ENCODE measurements at regions of chr4 and their contacts with region 1.

Region 1: DNA sequence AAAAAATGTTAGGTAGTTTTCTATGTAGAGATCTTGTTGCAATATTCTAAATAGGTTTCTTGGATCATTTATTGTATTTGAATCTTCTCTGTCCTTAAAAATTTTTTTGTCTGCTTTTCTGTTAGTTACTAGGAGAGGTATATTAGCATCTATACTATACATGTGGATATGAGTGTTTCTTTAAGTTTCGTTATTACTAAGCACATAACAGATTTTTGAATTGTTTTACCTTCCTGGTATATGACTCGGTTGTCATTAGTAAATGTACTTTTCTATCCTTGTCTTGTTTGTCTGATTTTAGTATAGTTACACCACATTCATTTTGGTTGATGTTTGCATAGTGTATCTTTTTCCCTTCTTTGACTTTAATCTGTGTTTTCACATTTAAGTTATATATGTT is 20.2 kb downstream of the PYURF start:
- DNase-seq: no peak
- H3K4me3 ChIP-seq: no peak overlapping the region
- H3K27ac ChIP-seq: no peak overlapping the region
- H3K4me1 ChIP-seq: no peaks in the 10 kb centered on the region
- H3K27me3 ChIP-seq: no peaks in the 10 kb centered on the region
- CTCF ChIP-seq: no peak

Region 2: DNA sequence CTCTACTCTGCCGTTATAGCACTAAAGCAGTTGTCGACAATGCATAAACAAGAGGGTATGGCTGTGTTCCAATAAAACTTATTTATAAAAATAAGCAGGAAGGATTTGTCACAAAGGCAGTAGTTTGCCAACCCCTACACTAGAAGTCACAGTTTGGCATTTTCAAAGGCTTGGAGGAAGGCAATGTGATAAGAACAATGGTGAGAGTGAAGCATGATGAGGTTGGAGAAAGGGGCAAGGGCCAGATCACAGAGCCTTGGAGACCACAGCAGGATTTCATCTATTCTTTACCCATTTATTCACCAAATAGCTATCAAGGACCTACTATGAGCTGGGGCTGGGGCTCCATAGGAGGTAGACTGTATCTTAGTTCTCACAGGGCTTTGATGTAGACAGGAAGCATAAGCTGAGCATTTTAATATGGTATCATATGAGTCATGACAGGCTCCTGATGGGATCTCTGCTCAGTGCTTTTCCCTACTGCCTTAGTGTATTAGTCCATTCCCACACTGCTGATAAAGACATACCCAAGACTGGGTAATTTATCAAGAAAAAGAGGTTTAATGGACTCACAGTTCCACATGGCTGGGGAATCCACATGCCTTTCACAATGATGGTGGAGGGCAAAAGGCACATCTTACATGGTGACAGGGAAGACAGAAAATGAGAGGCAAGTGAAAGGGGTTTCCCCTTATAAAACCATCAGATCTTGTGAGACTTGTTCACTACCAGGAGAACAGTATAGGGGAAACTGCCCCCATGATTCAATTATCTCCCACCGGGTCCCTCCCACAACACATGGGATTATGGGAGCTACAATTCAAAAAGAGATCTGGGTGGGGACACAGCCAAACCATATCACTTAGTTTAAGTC is 277.9 kb before region 1 on chr4:
- CTCF ChIA-PET with region 1: no interaction called
- dilution Hi-C with region 1: loop called (anchors 10 kb)
- in situ Hi-C with region 1: no loop called
- intact Hi-C with region 1: no loop called
- DNase-seq: peak; percentile 2
- H3K4me3 ChIP-seq: no peak overlapping the region
- H3K27ac ChIP-seq: no peak overlapping the region
- H3K4me1 ChIP-seq: no peaks in the 10 kb centered on the region
- H3K27me3 ChIP-seq: no peaks in the 10 kb centered on the region
- CTCF ChIP-seq: no peak

Region 3: GRCh38 chr4:88275516-88275915 is 227.8 kb before region 1 on chr4:
- CTCF ChIA-PET with region 1: no interaction called
- dilution Hi-C with region 1: no loop called
- in situ Hi-C with region 1: no loop called
- intact Hi-C with region 1: no loop called
- DNase-seq: no peak
- H3K4me3 ChIP-seq: no peak overlapping the region
- H3K27ac ChIP-seq: no peak overlapping the region
- H3K4me1 ChIP-seq: no peaks in the 10 kb centered on the region
- H3K27me3 ChIP-seq: no peaks in the 10 kb centered on the region
- CTCF ChIP-seq: no peak